Panc1 (cell line): ENCODE measurements at regions of chr7 and their contacts with region 1.

Region 1: GRCh38 chr7:76297387-76297756 is 5.1 kb upstream of the HSPB1 start:
- DNase-seq: no peak
- ATAC-seq: no peak
- H3K4me3 ChIP-seq: no peak overlapping the region
- H3K27ac ChIP-seq: peak overlapping the region; percentile 11; the same call in 1 of the 2 replicates
- H3K4me1 ChIP-seq: peaks cover 33% of the 10 kb centered on the region
- H3K27me3 ChIP-seq: no peaks in the 10 kb centered on the region
- CTCF ChIP-seq: no peak

Region 2: DNA sequence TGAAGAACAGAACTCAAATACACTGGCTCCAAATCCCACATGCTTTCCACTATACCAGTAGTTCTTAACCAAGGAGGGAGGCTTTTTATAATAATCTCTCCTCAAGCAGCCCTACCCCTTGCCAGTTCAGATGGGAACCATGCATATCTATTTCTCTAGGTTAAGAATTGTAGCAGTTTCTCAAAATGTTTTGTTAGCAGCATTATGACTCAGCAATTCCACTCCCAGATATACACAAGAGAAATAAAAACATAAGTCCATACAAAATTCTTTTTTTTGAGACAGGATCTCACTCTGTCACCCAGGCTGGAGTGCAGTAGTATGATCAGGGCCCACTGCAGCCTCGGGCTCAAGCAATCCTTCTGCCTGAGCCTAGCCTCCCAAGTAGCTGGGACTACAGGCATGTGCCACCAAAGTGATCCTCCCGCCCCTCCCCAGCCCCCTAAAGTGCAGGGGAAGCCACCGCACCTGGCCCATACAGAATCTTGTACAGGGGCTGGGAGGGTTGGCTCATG is 43.3 kb after region 1 on chr7:
- CTCF ChIA-PET with region 1: no interaction called
- POLR2A ChIA-PET with region 1: interaction called, 11 read pairs
- in situ Hi-C with region 1: no loop called
- intact Hi-C with region 1: no loop called
- DNase-seq: no peak
- ATAC-seq: peak; percentile 35; the same call in 1 of the 2 replicates
- H3K4me3 ChIP-seq: no peak overlapping the region
- H3K27ac ChIP-seq: no peak overlapping the region
- H3K4me1 ChIP-seq: peaks cover 28% of the 10 kb centered on the region
- H3K27me3 ChIP-seq: no peaks in the 10 kb centered on the region
- CTCF ChIP-seq: no peak